HCT116 (cell line): ENCODE measurements at regions of chr12 and their contacts with region 1.

Region 1: GRCh38 chr12:56688129-56688845 is at the start of gene PTGES3:
- DNase-seq: peak; percentile 96
- ATAC-seq: peak; percentile 82
- H3K4me3 ChIP-seq: peak within 1 kb of the TSS; percentile 99 to 100
- H3K27ac ChIP-seq: peak within 1 kb of the TSS; percentile 97
- H3K4me1 ChIP-seq: peaks cover 6 to 49% of the 10 kb centered on the region in 2 experiments; a peak in 3 of 4 replicates
- H3K27me3 ChIP-seq: no peaks in the 10 kb centered on the region
- CTCF ChIP-seq: no peak
- POLR2A ChIP-seq: peak; percentile 97
- RAD21 ChIP-seq: no peak
- total RNA-seq, gene PTGES3: 404 TPM

Region 2: GRCh38 chr12:56326533-56326932 is 361.8 kb before region 1 on chr12:
- CTCF ChIA-PET with region 1: no interaction called
- POLR2A ChIA-PET with region 1: no interaction called
- RAD21 ChIA-PET with region 1: no interaction called
- intact Hi-C with region 1: no loop called
- DNase-seq: no peak
- ATAC-seq: no peak
- H3K4me3 ChIP-seq: no peak overlapping the region
- H3K27ac ChIP-seq: no peak overlapping the region
- H3K4me1 ChIP-seq: peaks cover 5 to 9% of the 10 kb centered on the region in 2 experiments; a peak in 2 of 4 replicates
- H3K27me3 ChIP-seq: no peaks in the 10 kb centered on the region
- CTCF ChIP-seq: no peak
- POLR2A ChIP-seq: no peak
- RAD21 ChIP-seq: no peak

Region 3: GRCh38 chr12:56636675-56637540 is 51.4 kb before region 1 on chr12:
- CTCF ChIA-PET with region 1: interaction called, 16 read pairs
- POLR2A ChIA-PET with region 1: interaction called, 11 read pairs
- RAD21 ChIA-PET with region 1: interaction called in 1 of 2 experiments, 4 read pairs
- intact Hi-C with region 1: loop called (anchors 2 kb)
- DNase-seq: peak; percentile 99
- ATAC-seq: peak; percentile 69
- H3K4me3 ChIP-seq: peak overlapping the region; percentile 80 to 93
- H3K27ac ChIP-seq: peak overlapping the region; percentile 88
- H3K4me1 ChIP-seq: peaks cover 32 to 62% of the 10 kb centered on the region in 2 experiments
- H3K27me3 ChIP-seq: no peaks in the 10 kb centered on the region
- CTCF ChIP-seq: peak in 2 of 3 experiments; percentile 71 to 73; a peak in 4 of 6 replicates
- POLR2A ChIP-seq: no peak
- RAD21 ChIP-seq: no peak

Region 4: DNA sequence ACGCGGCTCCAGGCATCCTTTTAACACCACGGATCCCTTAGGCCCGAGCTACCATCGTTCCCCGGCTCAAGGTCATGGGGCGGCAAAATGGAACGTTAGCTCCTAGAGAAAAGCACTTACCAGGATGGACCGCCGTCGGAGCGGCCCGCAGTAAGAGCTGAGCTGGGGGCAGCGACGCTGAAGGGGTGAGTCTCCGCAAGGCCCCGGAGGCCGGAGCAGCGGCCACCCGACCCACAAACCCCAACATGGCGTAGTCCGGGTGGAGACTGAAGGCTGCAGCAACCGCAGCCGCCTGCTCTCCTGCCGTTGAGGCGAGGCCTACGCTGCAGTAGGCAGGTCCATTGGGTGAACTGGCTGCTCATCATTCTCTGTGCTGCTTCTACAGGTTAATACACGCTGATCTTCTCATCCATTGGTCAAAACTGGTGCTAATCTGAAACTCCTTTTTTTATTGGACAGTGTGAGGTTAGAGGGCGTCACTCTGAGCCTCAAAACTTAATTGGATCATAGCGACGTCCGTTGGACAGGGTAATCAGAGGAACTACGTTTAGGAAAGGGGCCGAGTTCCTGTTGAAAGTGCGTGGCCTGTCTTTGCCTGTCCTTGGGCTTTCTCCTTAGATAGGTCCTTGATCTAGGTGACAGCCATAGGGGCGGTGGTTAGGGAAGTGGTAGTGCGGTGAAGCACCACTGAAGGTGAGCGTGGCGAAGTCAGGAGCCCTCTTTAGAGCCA is 42.4 kb before region 1 on chr12 and contains the start of gene ATP5F1B:
- CTCF ChIA-PET with region 1: no interaction called
- POLR2A ChIA-PET with region 1: interaction called, 3 read pairs
- RAD21 ChIA-PET with region 1: no interaction called
- intact Hi-C with region 1: loop called (anchors 2 kb)
- DNase-seq: peak; percentile 100
- ATAC-seq: peak; percentile 98
- H3K4me3 ChIP-seq: peak within 1 kb of the TSS; percentile 99 to 100
- H3K27ac ChIP-seq: peak within 1 kb of the TSS; percentile 78
- H3K4me1 ChIP-seq: peaks cover 2 to 19% of the 10 kb centered on the region in 2 experiments; a peak in 3 of 4 replicates
- H3K27me3 ChIP-seq: no peaks in the 10 kb centered on the region
- CTCF ChIP-seq: no peak
- POLR2A ChIP-seq: peak; percentile 98
- RAD21 ChIP-seq: no peak
- total RNA-seq, gene ATP5F1B: 1,051 TPM

Region 5: GRCh38 chr12:56677680-56678079 is 10.6 kb before region 1 on chr12:
- CTCF ChIA-PET with region 1: interaction called, 4 read pairs
- POLR2A ChIA-PET with region 1: interaction called, 17 read pairs
- RAD21 ChIA-PET with region 1: interaction called in 1 of 2 experiments, 6 read pairs
- intact Hi-C with region 1: no loop called
- DNase-seq: no peak
- ATAC-seq: no peak
- H3K4me3 ChIP-seq: no peak overlapping the region
- H3K27ac ChIP-seq: no peak overlapping the region
- H3K4me1 ChIP-seq: peaks cover 2 to 24% of the 10 kb centered on the region in 2 experiments; a peak in 2 of 4 replicates
- H3K27me3 ChIP-seq: no peaks in the 10 kb centered on the region
- CTCF ChIP-seq: no peak
- POLR2A ChIP-seq: no peak
- RAD21 ChIP-seq: no peak

Region 6: GRCh38 chr12:56699020-56699661 is 10.9 kb after region 1 on chr12:
- CTCF ChIA-PET with region 1: no interaction called
- POLR2A ChIA-PET with region 1: interaction called, 16 read pairs
- RAD21 ChIA-PET with region 1: no interaction called
- intact Hi-C with region 1: no loop called
- DNase-seq: no peak
- ATAC-seq: no peak
- H3K4me3 ChIP-seq: no peak overlapping the region
- H3K27ac ChIP-seq: no peak overlapping the region
- H3K4me1 ChIP-seq: 0 out of 4 replicates have a peak, but pooled peaks cover 0 to 3% of the 10 kb centered on the region in 2 experiments
- H3K27me3 ChIP-seq: no peaks in the 10 kb centered on the region
- CTCF ChIP-seq: no peak
- POLR2A ChIP-seq: no peak
- RAD21 ChIP-seq: no peak

Region 7: DNA sequence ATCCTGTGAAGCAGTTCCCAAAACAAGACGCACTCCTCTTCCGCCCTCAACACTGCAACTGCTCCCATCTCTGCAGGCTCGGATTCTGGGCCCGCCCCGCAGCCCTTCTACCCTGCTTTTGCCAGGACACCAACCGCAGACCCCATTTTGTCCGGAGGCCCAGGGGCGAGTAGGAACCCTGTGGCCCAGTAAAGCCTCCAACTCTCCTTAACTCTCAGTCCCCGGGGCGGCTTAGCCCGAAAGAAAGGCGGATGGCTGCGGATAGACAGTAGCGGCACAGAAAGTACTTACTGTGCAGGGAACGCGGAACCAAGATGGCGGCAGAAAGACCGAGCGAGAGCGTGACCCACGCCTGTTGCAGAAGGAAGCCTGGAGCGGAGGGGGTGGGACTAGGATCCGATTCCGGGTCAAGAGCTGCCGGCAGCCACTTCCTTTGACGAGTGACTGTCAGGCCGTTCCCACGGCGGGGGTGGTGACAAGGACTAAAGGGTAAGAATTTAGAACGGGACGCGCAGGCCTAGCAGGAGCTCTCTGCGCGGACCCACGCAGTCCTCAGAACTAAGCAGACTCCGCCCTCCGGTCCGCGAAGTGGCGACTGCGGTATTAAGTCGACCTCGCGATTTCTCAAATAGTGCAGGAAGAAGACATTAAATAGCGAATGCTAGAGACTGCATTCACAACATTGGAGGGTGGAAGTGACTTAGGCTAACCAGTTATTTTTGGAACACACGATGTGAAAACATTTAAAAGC is 36.9 kb after region 1 on chr12 and contains the start of gene NACA:
- CTCF ChIA-PET with region 1: no interaction called
- POLR2A ChIA-PET with region 1: interaction called, 31 read pairs
- RAD21 ChIA-PET with region 1: no interaction called
- intact Hi-C with region 1: loop called (anchors 2 kb)
- DNase-seq: peak; percentile 95
- ATAC-seq: peak; percentile 94
- H3K4me3 ChIP-seq: peak within 1 kb of the TSS; percentile 92 to 99
- H3K27ac ChIP-seq: peak within 1 kb of the TSS; percentile 91
- H3K4me1 ChIP-seq: peaks cover 21 to 42% of the 10 kb centered on the region in 2 experiments; a peak in 3 of 4 replicates
- H3K27me3 ChIP-seq: no peaks in the 10 kb centered on the region
- CTCF ChIP-seq: no peak
- POLR2A ChIP-seq: peak; percentile 75
- RAD21 ChIP-seq: no peak
- total RNA-seq, gene NACA: 896 TPM